CD8-positive, alpha-beta T cell (primary cell): ENCODE measurements at regions of chr4 and their contacts with region 1.

Region 1: DNA sequence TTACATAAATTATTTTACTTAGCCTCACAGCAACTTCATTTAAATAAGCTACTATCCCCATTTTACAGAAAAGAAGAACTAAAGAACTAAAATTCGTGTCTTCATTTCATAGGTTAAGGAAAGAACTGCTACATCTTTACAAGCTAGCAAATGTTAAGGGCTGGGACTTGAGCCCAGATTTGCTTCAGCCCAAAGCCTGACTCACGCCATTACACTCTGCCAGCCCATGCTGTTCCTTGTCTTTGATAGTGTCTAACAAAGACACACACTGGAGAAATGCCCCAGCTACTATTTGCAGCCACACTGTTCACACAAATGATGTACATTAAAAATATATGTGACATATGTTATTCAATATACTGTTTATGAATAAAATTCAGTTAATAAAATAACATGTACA is 29.0 kb upstream of the ERVMER34-1 start:
- DNase-seq: no peak
- ATAC-seq: no peak
- H3K4me3 ChIP-seq: no peak overlapping the region
- H3K4me3 Mint-ChIP-seq: no peak overlapping the region
- H3K27ac ChIP-seq: no peak overlapping the region
- H3K27ac Mint-ChIP-seq: no peak overlapping the region
- H3K4me1 ChIP-seq: no peaks in the 10 kb centered on the region
- H3K4me1 Mint-ChIP-seq: no peaks in the 10 kb centered on the region
- H3K27me3 ChIP-seq: peaks cover 0 to 3% of the 10 kb centered on the region in 2 experiments
- H3K27me3 Mint-ChIP-seq: peaks cover 13% of the 10 kb centered on the region
- CTCF ChIP-seq: no peak

Region 2: DNA sequence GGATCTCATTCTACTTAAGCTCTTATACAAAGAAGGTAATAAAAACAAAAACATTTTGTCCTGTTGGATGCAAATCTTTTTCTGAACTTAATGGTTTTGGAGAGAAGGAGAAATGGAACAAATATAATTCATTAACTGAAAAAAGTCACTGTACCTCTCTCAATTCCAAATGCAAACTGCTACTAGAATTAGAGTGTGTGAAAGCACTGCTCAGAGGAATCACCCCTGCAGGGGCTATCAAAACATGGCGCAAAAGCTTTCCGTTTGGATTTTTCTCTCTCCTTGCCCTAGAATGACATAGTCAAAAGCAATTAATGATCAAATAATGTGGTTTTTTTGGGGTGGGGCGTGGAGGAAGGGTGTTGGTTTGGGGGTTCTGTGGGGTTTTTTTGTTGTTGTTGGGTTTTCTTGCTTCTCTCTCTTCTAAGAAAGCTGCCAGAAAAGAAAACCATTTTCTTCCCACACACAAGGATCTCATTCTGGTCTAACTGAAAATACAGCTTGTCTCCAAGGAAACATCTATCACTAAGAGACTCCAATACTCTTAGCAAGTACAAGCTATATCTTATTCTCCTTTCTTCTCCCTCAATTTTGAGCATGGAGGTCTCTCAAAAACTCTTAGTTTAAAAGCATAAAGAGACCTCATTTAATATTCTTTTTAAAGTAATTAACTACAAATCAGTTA is 162.7 kb before region 1 on chr4:
- CTCF ChIA-PET with region 1: no interaction called
- POLR2A ChIA-PET with region 1: no interaction called
- intact Hi-C with region 1: loop called in 1 of 2 experiments (anchors 10 kb)
- DNase-seq: peak in 2 of 9 experiments; percentile 2 to 7
- ATAC-seq: no peak
- H3K4me3 ChIP-seq: no peak overlapping the region
- H3K4me3 Mint-ChIP-seq: no peak overlapping the region
- H3K27ac ChIP-seq: no peak overlapping the region
- H3K27ac Mint-ChIP-seq: no peak overlapping the region
- H3K4me1 ChIP-seq: no peaks in the 10 kb centered on the region
- H3K4me1 Mint-ChIP-seq: peaks cover 11% of the 10 kb centered on the region
- H3K27me3 ChIP-seq: no peaks in the 10 kb centered on the region
- H3K27me3 Mint-ChIP-seq: peaks cover 2% of the 10 kb centered on the region
- CTCF ChIP-seq: no peak